Ovary (tissue), 10 donors: ENCODE measurements at regions of chr1 and their contacts with region 1.

Region 1: DNA sequence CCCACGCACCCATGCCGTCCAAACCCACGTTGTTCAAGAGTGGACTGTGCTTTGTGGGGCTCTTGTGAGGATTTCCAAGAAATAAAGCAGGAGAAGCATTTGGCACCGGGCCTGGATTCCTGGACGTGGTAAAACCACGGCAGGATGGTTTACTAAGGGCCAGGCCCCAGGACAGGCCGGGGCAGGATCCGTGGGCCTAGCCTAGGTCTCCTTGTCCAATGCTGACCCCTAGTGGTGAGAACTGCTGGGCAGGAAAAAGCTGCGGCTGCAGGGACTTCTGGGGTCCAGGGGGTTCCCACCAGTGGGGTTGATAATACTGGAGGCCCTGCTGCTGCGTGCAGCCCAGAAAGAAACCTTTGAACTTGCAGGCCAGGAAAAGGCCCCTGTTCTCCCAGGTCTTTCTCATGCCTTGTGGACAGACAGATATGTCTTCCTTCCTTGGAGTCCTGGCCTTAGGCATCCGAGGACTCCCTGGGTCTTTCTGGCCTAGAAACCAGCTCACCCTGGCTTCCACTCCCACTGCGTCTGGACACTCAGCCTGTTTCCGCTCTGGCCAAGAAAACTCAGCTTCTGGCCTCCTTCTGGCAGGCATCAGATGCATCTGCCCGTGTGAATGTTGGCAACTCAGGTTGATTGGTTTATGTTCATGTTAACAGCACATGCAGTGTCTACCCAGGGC is 106.9 kb upstream of the TMEM51 start:
- DNase-seq: peak; percentile 77 to 90 (median 84)
- H3K4me3 ChIP-seq: no peak overlapping the region
- H3K27ac ChIP-seq: no peak overlapping the region
- H3K4me1 ChIP-seq: peaks cover 3% of the 10 kb centered on the region
- H3K27me3 ChIP-seq: no peaks in the 10 kb centered on the region
- CTCF ChIP-seq: peak; percentile 82 to 87 (median 85)
- EP300 ChIP-seq: no peak
- POLR2A ChIP-seq: no peak

Region 2: DNA sequence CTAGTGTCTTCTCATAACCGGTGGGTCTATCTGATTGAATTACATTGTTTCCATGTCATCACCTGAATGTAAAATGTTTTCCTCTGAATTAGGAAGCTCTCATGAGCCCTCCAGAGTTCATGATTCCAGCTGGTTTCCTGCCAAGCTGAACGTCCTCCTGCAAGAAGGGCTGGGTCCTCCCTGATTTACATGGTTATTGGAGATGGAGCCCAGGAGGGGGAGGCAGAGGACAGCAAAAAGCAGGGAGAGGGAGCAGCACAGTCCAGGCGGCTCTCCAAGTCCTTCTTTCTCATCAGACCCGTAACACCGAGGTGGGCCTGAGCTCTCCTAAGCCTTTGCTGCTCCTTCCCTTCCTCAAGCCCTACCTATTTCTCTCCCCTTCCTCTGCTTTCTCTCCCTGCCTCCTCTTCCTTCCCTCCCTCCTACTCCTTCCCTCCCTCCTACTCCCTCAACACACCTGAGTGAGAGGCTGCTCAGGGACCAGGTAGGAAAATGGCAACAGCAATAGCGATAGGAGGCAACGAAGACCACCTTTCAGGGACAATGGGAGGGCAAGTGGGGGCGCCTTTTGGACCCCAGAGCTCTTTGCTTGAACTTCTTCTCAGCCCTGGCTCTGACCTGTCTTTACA is 1080.7 kb before region 1 on chr1:
- intact Hi-C with region 1: loop called in 2 of 4 experiments (anchors 5 kb)
- DNase-seq: peak; percentile 75 to 84 (median 80)
- H3K4me3 ChIP-seq: no peak overlapping the region
- H3K27ac ChIP-seq: no peak overlapping the region
- H3K4me1 ChIP-seq: no peaks in the 10 kb centered on the region
- H3K27me3 ChIP-seq: no peaks in the 10 kb centered on the region
- CTCF ChIP-seq: peak; percentile 40 to 70 (median 56)
- EP300 ChIP-seq: no peak
- POLR2A ChIP-seq: no peak

Region 3: GRCh38 chr1:14113841-14114567 is 932.6 kb before region 1 on chr1:
- intact Hi-C with region 1: loop called in 1 of 4 experiments (anchors 10 kb)
- DNase-seq: peak in 3 of 5 donors; percentile 17 to 46 (median 25)
- H3K4me3 ChIP-seq: no peak overlapping the region
- H3K27ac ChIP-seq: no peak overlapping the region
- H3K4me1 ChIP-seq: no peaks in the 10 kb centered on the region
- H3K27me3 ChIP-seq: no peaks in the 10 kb centered on the region
- CTCF ChIP-seq: peak in 1 of 3 donors; percentile 13
- EP300 ChIP-seq: no peak
- POLR2A ChIP-seq: no peak

Region 4: DNA sequence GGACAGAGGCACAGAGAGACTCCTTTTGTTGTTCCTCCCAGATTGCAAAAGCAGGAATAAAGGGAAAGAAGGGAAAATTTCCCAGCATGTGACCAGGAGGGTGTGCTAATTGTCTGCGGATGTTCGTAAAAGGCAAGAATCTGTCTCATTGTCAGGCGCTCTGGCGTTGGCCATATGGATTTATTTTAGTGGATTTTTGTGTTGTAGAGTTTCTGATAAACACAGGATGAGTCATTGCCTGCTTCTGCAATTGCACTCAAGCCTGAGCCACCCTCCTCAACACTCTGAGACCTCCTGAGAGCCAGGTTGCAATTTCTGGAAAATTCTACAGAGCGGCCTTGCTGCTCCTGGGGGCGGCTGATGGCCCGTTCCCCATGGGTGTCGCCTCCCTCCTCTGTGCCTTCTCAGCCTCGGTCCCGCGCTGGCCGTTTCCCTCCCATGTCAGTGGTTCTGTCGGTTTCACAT is 220.4 kb before region 1 on chr1:
- intact Hi-C with region 1: loop called in 1 of 4 experiments (anchors 10 kb)
- DNase-seq: peak in 4 of 5 donors; percentile 32 to 62 (median 46)
- H3K4me3 ChIP-seq: no peak overlapping the region
- H3K27ac ChIP-seq: no peak overlapping the region
- H3K4me1 ChIP-seq: peaks cover 6% of the 10 kb centered on the region
- H3K27me3 ChIP-seq: no peaks in the 10 kb centered on the region
- CTCF ChIP-seq: peak in 1 of 3 donors; percentile 37
- EP300 ChIP-seq: no peak
- POLR2A ChIP-seq: no peak

Region 5: DNA sequence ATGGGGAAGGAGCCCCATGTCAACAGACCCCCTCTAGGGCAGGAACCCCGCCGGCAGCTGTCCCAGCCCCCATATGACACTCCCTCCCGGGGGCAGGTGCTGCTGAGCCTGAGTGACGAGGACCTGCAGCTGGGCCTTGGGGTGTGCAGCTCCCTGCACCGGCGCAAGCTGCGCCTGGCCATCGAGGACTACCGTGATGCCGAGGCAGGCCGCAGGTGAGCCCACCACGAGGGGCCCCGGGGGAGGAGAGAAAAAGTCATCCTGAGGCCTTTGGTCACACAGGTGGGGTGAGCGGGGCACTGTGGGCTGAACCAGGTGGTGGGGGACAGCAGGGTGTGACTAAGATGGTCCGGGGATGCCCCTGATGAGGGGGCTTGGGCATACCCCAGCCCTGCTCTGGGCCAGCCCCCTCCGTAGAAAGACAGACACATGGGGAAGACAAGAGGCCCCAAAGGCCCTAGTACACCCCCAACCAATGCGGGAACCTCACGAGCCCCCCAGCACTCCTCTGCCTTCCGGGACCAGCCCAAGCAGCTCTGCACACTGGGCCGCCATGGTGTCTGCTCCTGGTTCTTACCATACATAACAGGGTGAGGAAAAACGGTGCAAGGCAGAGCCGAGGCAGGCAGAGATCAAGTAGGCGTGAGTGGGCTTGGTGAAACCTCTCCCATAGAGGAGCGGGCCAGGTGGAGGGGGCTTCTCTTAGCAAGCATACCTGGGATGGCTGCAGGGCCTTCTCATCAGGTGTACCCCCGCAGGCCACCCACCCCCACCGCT is 48.3 kb after region 1 on chr1:
- intact Hi-C with region 1: loop called in 1 of 4 experiments (anchors 5 kb)
- DNase-seq: no peak
- H3K4me3 ChIP-seq: no peak overlapping the region
- H3K27ac ChIP-seq: no peak overlapping the region
- H3K4me1 ChIP-seq: peaks cover 4% of the 10 kb centered on the region
- H3K27me3 ChIP-seq: no peaks in the 10 kb centered on the region
- CTCF ChIP-seq: no peak
- EP300 ChIP-seq: no peak
- POLR2A ChIP-seq: no peak

Region 6: GRCh38 chr1:15178571-15179484 is 132.2 kb after region 1 on chr1:
- intact Hi-C with region 1: no loop called
- DNase-seq: peak in 3 of 5 donors; percentile 27 to 61 (median 59)
- H3K4me3 ChIP-seq: no peak overlapping the region
- H3K27ac ChIP-seq: peak overlapping the region; percentile 16 to 82
- H3K4me1 ChIP-seq: peaks cover 9% of the 10 kb centered on the region
- H3K27me3 ChIP-seq: no peaks in the 10 kb centered on the region
- CTCF ChIP-seq: no peak
- EP300 ChIP-seq: no peak
- POLR2A ChIP-seq: no peak